ENCODE measurements at regions of chr21 and their contacts with region 1.

Region 1: DNA sequence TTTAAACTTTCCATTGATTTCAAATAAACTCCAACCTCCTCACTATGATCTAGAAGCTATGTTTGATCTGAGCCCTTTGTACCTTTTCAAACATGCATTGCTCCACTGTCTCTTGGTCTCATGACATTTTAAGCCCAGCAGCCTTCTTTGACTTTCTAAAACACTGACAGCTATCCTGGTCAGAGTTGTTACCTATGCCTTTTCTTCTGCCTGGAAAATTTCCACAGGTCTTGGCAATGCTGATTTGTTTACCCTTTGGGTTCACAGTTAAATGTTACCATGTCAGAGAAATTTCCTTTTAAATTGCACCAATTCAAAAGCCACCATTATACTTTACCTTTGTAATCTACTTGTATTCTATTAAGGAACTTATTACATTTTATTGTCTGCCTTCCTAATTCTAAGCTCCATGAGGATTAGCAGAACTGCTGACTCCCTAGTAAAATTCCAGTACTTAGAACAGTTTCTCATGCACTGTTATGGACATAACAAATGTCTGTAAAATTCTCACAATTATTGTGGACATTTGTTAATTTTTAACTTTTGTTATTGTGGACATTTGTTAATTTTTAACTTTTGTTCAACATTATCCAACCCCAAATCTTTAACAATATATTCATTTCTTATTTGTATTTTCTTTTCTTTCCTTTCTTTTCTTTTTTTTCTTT is 1064.4 kb downstream of the NCAM2 start:
- DNase-seq: no peak
- H3K4me3 ChIP-seq: no peak overlapping the region
- H3K4me3 Mint-ChIP-seq: peak overlapping the region; percentile 43
- H3K27ac Mint-ChIP-seq: no peak overlapping the region
- H3K4me1 ChIP-seq: peaks cover 4% of the 10 kb centered on the region; the same call in 1 of the 2 replicates
- H3K4me1 Mint-ChIP-seq: peaks cover 18% of the 10 kb centered on the region
- H3K27me3 ChIP-seq: no peaks in the 10 kb centered on the region
- H3K27me3 Mint-ChIP-seq: no peaks in the 10 kb centered on the region
- CTCF ChIP-seq: no peak

Region 2: DNA sequence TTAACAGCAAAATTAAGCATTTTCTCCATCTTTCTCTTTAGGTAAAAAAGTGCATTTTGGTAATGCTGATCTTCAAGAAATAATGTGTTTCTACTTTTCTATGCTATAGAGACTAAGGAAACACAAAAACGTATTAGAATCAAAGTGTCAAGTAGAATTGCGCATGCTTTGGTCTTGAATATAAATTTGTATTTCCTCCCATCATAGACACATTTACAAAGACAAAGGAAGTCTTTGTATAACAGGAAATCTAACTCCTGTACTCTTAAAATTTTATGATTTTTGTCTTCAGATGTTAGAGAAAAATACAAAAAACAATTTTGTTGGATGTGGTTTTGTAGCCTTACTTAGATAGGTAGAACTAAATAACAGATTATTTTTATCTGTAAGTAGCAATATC is 235.0 kb after region 1 on chr21:
- CTCF ChIA-PET with region 1: no interaction called
- POLR2A ChIA-PET with region 1: no interaction called
- intact Hi-C with region 1: no loop called
- DNase-seq: no peak
- H3K4me3 ChIP-seq: no peak overlapping the region
- H3K4me3 Mint-ChIP-seq: no peak overlapping the region
- H3K27ac Mint-ChIP-seq: no peak overlapping the region
- H3K4me1 ChIP-seq: no peaks in the 10 kb centered on the region
- H3K4me1 Mint-ChIP-seq: no peaks in the 10 kb centered on the region
- H3K27me3 ChIP-seq: no peaks in the 10 kb centered on the region
- H3K27me3 Mint-ChIP-seq: no peaks in the 10 kb centered on the region
- CTCF ChIP-seq: no peak

Region 3: DNA sequence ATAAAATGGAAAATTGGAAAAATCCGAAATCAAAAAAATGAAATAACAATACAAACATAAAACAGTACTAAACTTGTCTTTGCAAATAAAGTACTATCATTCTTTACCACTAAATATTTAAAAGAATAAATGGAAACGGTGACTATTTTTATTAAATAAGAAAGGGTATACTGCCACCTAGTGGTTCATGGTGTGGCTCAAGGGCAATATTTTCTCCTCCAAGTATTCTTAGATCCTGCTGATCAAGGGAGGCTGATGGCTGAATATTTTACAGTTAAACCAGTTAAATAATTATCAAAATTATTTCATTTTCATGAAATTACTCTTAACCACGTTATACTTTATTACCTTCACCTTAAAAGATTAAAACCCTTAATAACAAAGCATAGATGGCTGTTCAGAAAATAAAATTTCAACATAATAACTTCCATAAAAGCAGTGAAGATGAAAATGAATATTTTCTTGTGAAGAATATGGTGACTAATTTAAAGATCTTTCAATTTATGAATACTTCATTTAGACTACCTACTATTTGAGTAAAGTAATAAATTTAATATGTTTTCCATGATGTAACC is 729.5 kb after region 1 on chr21:
- CTCF ChIA-PET with region 1: no interaction called
- POLR2A ChIA-PET with region 1: no interaction called
- intact Hi-C with region 1: loop called (anchors 10 kb)
- DNase-seq: peak in 1 of 2 experiments; percentile 40
- H3K4me3 ChIP-seq: no peak overlapping the region
- H3K4me3 Mint-ChIP-seq: no peak overlapping the region
- H3K27ac Mint-ChIP-seq: no peak overlapping the region
- H3K4me1 ChIP-seq: no peaks in the 10 kb centered on the region
- H3K4me1 Mint-ChIP-seq: no peaks in the 10 kb centered on the region
- H3K27me3 ChIP-seq: no peaks in the 10 kb centered on the region
- H3K27me3 Mint-ChIP-seq: no peaks in the 10 kb centered on the region
- CTCF ChIP-seq: peak; percentile 55 to 59

Measured in Caco-2 (cell line).